HepG2 (cell line): ENCODE measurements at regions of chr5 and their contacts with region 1.

Region 1: DNA sequence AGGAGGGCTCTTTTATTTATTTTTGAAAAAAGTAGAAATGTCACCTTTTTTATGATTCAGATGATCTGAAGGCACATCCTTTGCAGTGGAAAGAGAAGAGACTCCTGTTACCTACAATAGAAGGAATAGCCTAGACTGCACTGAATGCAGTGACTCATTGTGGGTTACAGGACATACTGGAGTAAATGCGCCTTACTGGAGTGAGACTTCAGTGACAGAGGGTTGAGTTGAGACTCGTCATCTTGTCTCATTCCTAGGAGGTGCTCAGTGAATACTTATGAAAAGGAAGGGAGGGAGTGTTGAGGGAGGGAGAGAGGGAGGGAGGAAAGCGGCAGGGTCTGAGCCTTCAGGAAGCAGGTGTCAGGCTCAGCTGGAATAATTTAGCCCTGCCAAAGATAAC is 25.2 kb downstream of the ANKRA2 start:
- DNase-seq: peak; percentile 50
- ATAC-seq: no peak
- H3K4me3 ChIP-seq: no peak overlapping the region
- H3K27ac ChIP-seq: no peak overlapping the region
- H3K4me1 ChIP-seq: peaks cover 67% of the 10 kb centered on the region
- H3K27me3 ChIP-seq: no peaks in the 10 kb centered on the region
- CTCF ChIP-seq: no peak
- EP300 ChIP-seq: no peak
- POLR2A ChIP-seq: no peak
- RAD21 ChIP-seq: no peak

Region 2: GRCh38 chr5:73498057-73499008 is 41.9 kb before region 1 on chr5 and contains the start of gene BTF3:
- CTCF ChIA-PET with region 1: no interaction called
- POLR2A ChIA-PET with region 1: interaction called, 9 read pairs
- in situ Hi-C with region 1: no loop called
- intact Hi-C with region 1: loop called (anchors 5 kb)
- DNase-seq: peak; percentile 97
- ATAC-seq: peak; percentile 95
- H3K4me3 ChIP-seq: peak within 1 kb of the TSS; percentile 83 to 100 (median 99)
- H3K27ac ChIP-seq: peak within 1 kb of the TSS; percentile 92
- H3K4me1 ChIP-seq: peaks cover 42% of the 10 kb centered on the region
- H3K27me3 ChIP-seq: no peaks in the 10 kb centered on the region; a peak in 2 of 5 replicates
- CTCF ChIP-seq: peak; percentile 34
- EP300 ChIP-seq: no peak
- POLR2A ChIP-seq: peak; percentile 90 to 92
- RAD21 ChIP-seq: 0 out of 2 replicates have a peak, but pooled peaks have one; percentile 14
- total RNA-seq, gene BTF3: 698 and 836 TPM in 2 replicates

Region 3: DNA sequence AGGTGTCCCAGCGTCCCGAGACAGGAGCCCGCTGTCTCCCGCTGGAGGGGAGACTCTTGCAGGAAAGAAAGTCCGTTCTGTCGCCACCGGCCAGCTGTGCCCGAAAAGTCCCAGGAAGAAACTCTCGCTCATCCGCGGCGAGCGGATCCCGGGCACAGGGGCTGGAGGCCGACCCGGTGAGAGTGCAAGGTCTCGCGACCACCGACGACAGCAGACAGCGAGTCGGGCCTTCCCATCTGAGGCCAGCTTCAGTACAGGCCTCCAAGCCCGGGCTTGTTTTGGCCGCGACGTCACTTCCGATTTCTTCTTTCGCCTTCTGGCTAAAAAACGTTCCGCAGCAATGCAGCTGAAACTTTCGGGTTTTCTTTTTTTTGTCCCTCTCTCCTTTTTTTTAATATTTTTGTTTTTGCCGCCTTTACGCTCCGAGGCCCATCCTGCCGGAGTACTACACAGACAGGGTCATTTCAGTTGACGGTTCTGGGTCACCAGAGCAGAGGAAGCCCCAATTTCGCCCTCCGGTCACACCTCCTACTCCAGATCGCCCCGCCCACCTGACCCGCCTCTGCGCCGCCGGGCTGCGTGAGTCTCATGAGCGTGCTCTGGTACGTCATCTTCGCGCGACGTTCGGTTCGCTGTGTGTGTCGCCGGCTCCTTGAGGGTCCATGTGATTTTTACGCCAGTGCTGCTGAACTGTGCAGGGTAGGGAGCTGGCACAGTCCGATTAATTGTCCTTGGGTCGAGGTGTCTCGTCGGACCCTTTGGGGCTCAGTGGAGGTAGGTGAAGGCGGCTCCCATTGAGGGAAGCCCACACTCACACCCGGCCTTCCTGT is 25.2 kb after region 1 on chr5 and contains the starts of genes ANKRA2 and UTP15:
- CTCF ChIA-PET with region 1: no interaction called
- POLR2A ChIA-PET with region 1: interaction called, 26 read pairs
- in situ Hi-C with region 1: no loop called
- intact Hi-C with region 1: loop called (anchors 2 kb)
- DNase-seq: peak; percentile 95
- ATAC-seq: peak; percentile 95
- H3K4me3 ChIP-seq: peak within 1 kb of the TSS; percentile 77 to 89 (median 82)
- H3K27ac ChIP-seq: peak within 1 kb of the TSS; percentile 75
- H3K4me1 ChIP-seq: peaks cover 28% of the 10 kb centered on the region
- H3K27me3 ChIP-seq: no peaks in the 10 kb centered on the region; a peak in 1 of 5 replicates
- CTCF ChIP-seq: 0 out of 2 replicates have a peak, but pooled peaks have one; percentile 3
- EP300 ChIP-seq: no peak
- POLR2A ChIP-seq: peak; percentile 72 to 75
- RAD21 ChIP-seq: no peak
- total RNA-seq, gene ANKRA2: 20.4 and 23.6 TPM in 2 replicates
- total RNA-seq, gene UTP15: 35.8 and 45.2 TPM in 2 replicates